Activated CD4-positive, alpha-beta memory T cell treated with anti-CD3 and anti-CD28 coated beads, Interleukin-2, amount 10 ng/mL, durations not matched to agents 7 days and 5 days (primary cell): ENCODE measurements at regions of chr18 and their contacts with region 1.

Region 1: GRCh38 chr18:46148810-46149209 is 44.6 kb downstream of the HAUS1 start:
- DNase-seq: peak; percentile 60
- H3K4me3 Mint-ChIP-seq: no peak overlapping the region
- H3K27ac Mint-ChIP-seq: peak overlapping the region; percentile 45
- H3K4me1 Mint-ChIP-seq: peaks cover 34% of the 10 kb centered on the region
- H3K27me3 Mint-ChIP-seq: peaks cover 2% of the 10 kb centered on the region

Region 2: DNA sequence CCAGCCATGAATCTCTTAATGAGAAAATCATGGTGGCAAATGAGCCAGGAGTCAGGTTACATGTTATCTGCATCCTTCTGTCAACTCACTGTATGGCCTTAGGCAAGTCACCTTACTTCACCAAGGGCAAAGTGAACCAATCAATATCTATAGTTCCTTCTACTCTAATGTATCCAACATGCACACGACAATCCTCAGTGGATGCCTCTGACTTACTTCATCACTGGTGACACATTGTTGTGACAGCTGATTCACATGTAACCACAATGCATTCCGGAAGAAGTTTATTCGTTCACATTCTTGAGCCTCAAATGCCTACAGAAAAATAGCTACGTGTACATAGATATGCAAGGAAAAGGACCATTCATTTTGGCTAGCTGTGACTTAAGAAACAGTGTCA is 155.4 kb before region 1 on chr18:
- CTCF ChIA-PET with region 1: no interaction called
- POLR2A ChIA-PET with region 1: no interaction called
- DNase-seq: no peak
- H3K4me3 Mint-ChIP-seq: no peak overlapping the region
- H3K27ac Mint-ChIP-seq: no peak overlapping the region
- H3K4me1 Mint-ChIP-seq: peaks cover 16% of the 10 kb centered on the region
- H3K27me3 Mint-ChIP-seq: no peaks in the 10 kb centered on the region

Region 3: GRCh38 chr18:46213295-46213694 is 64.5 kb after region 1 on chr18:
- CTCF ChIA-PET with region 1: interaction called, 36 read pairs
- POLR2A ChIA-PET with region 1: interaction called, 5 read pairs
- DNase-seq: no peak
- H3K4me3 Mint-ChIP-seq: no peak overlapping the region
- H3K27ac Mint-ChIP-seq: no peak overlapping the region
- H3K4me1 Mint-ChIP-seq: peaks cover 54% of the 10 kb centered on the region
- H3K27me3 Mint-ChIP-seq: no peaks in the 10 kb centered on the region